Left colon (tissue), 2 donors: ENCODE measurements at regions of chr21 and their contacts with region 1.

Region 1: DNA sequence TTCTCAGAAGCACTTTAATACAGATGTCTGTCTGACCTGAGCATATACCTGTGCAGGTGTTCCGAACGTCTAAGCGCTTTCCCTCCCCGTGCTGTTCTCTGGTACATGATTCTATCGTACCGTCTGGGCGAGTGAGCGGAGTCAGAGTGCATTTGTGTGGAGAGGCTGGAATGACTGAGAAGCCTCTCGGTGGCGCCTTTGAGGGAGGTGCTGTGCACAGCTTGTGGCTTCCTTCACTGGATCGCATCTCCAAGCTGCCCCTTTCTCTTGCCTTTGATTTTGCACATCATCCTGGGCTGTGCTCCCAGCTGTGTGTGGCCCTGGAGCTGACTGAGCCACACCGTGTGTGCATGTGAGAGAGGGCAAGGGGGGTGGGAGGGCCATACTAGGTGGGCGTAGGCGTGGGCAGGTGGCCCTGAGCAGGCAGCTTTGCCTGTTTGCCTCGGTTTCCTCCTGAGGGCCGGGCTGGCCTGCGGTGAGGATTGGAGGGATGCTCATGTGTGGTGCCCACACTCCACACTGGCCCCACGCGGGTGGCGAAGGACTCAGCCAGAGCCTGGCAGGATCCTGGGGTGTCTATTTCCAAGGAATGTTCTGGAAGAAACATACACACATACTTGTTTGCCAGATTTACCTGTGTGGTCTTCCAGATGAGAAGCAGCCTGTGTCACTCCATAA is 105.3 kb downstream of the ADARB1 start:
- DNase-seq: no peak
- ATAC-seq: no peak

Region 2: DNA sequence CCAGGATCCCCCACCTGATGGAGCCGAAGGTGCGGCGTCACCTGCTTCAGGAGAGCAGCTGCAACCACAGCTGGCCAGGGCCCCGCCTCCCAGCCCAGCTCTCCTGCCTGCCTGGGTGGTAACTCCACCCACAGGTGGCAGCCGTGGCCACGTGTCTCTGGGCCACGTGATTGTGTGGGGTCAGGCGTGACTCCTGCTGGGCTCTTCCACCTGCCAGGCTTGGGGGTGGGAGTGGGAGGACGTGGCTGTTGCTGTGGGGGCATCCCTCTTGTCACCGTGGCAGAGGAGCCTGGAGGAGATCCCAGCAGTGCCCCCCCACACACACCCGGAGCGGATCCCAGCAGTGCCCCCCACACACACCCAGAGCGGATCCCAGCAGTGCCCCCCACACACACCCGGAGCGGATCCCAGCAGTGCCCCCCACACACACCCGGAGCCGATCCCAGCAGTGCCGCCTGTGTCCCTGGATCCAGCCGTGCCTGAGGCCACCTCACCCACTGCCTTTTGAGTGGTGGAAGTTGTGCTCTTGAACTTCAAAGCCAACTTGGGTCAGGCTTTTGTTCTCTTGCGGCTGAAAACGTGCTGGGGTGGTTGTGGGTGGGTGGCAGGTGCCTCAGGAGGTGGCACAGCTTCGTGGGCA is 75.8 kb after region 1 on chr21:
- intact Hi-C with region 1: loop called in 1 of 2 experiments (anchors 10 kb)
- DNase-seq: peak; percentile 47 to 63
- ATAC-seq: peak; percentile 95

Region 3: GRCh38 chr21:45558044-45558721 is 378.5 kb after region 1 on chr21:
- intact Hi-C with region 1: no loop called
- DNase-seq: peak in 1 of 2 donors; percentile 21
- ATAC-seq: no peak